AG04450 (cell line): ENCODE measurements at regions of chr15 and their contacts with region 1.

Region 1: GRCh38 chr15:100918034-100918689 is 995 bp upstream of the LRRK1 start:
- DNase-seq: no peak
- H3K4me3 ChIP-seq: peak overlapping the region; percentile 66
- H3K27ac ChIP-seq: peak overlapping the region; percentile 21
- H3K27me3 ChIP-seq: no peaks in the 10 kb centered on the region
- CTCF ChIP-seq: peak; percentile 90

Region 2: DNA sequence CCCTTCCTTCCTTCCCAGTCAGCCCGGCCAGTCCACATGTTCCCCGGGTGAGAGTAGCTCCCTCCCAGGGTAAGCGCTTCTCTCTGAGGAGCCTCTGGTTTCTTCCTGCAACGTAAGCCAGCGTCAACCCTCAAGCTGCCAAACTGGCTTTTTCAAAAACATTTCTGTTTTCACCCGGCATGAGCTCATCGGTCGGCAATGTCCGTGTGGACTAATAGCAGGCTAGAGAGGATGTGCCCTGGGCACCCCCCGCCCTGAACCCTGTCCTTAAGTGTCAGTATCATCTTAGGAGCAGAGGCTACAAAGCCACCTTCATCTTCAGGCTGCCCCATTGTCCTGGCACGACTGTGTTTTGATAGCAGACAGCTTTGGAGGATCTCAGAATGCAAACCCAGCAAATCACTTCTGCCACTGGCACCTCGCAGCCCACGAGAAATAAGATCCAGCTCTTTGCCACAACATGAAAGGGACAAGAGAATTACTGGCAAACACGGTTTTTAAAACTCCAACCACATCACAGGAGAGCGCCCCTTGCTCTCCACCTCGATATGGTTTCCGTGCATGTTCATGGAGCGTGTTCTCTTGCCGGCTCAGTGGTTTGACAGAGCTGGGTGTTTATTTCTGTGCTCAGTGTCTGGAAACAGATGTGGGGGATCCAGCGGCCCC is 28.6 kb before region 1 on chr15:
- CTCF ChIA-PET with region 1: interaction called, 11 read pairs
- POLR2A ChIA-PET with region 1: no interaction called
- DNase-seq: peak; percentile 69
- H3K4me3 ChIP-seq: no peak overlapping the region
- H3K27ac ChIP-seq: peak overlapping the region; percentile 65
- H3K27me3 ChIP-seq: no peaks in the 10 kb centered on the region
- CTCF ChIP-seq: no peak

Region 3: GRCh38 chr15:100897080-100897872 is 20.9 kb before region 1 on chr15:
- CTCF ChIA-PET with region 1: interaction called, 22 read pairs
- POLR2A ChIA-PET with region 1: no interaction called
- DNase-seq: no peak
- H3K4me3 ChIP-seq: no peak overlapping the region
- H3K27ac ChIP-seq: no peak overlapping the region
- H3K27me3 ChIP-seq: no peaks in the 10 kb centered on the region
- CTCF ChIP-seq: no peak

Region 4: GRCh38 chr15:100902436-100903167 is 15.6 kb before region 1 on chr15:
- CTCF ChIA-PET with region 1: interaction called, 34 read pairs
- POLR2A ChIA-PET with region 1: interaction called, 3 read pairs
- DNase-seq: peak; percentile 69
- H3K4me3 ChIP-seq: peak overlapping the region; percentile 31; the same call in 1 of the 2 replicates
- H3K27ac ChIP-seq: peak overlapping the region; percentile 95
- H3K27me3 ChIP-seq: no peaks in the 10 kb centered on the region
- CTCF ChIP-seq: no peak

Region 5: DNA sequence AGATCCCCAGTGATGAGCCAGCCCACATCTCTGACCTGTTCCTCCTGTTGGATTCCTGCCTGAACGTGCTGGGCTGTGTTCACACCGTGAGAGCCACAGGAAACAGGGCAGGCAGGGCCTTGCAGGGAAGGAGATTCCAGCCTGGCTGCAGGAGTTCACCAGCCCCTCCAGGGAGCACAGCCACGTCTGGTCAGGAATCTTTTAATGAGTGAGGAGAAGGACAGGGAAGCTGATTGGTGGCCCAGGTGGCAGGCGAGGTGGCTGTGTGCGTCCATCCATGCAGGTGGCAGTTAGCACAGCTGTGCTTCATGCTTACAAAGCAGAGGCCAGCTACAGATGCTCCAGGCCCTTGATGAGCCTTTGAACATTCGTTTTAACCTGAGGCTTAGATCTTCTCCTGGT is 11.5 kb after region 1 on chr15:
- CTCF ChIA-PET with region 1: interaction called, 28 read pairs
- POLR2A ChIA-PET with region 1: no interaction called
- DNase-seq: no peak
- H3K4me3 ChIP-seq: no peak overlapping the region
- H3K27ac ChIP-seq: no peak overlapping the region
- H3K27me3 ChIP-seq: no peaks in the 10 kb centered on the region
- CTCF ChIP-seq: no peak

Region 6: GRCh38 chr15:100944244-100944895 is 26.2 kb after region 1 on chr15:
- CTCF ChIA-PET with region 1: interaction called, 21 read pairs
- POLR2A ChIA-PET with region 1: no interaction called
- DNase-seq: no peak
- H3K4me3 ChIP-seq: no peak overlapping the region
- H3K27ac ChIP-seq: peak overlapping the region; percentile 39
- H3K27me3 ChIP-seq: no peaks in the 10 kb centered on the region
- CTCF ChIP-seq: no peak

Region 7: DNA sequence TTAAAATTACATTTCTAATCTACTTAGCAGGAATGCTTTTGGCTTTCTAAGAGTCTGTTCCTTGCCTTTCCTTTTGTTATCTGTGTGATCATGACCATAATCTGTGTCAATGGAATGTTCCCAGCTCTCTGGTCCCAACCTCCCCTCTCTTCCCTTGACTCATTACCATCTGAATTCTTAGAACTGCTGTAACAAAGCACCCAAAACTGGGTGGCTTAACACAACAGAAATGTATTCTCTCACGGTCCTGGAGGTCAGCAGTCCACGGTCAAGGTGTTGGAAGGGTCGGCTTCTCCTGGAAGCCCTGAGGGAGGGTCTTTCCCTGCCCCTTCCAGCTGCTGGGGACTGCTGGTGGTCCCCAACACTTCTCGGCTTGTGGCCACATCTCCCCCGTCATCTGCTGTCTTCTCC is 82.1 kb after region 1 on chr15:
- CTCF ChIA-PET with region 1: interaction called, 251 read pairs
- POLR2A ChIA-PET with region 1: no interaction called
- DNase-seq: no peak
- H3K4me3 ChIP-seq: no peak overlapping the region
- H3K27ac ChIP-seq: no peak overlapping the region
- H3K27me3 ChIP-seq: no peaks in the 10 kb centered on the region
- CTCF ChIP-seq: no peak